Right ventricle myocardium inferior (tissue), 1 donor: ENCODE measurements at regions of chr6 and their contacts with region 1.

Region 1: GRCh38 chr6:87929843-87930288 is 117.8 kb upstream of the SPACA1 start:
- DNase-seq: peak; percentile 78
- ATAC-seq: peak; percentile 98

Region 2: DNA sequence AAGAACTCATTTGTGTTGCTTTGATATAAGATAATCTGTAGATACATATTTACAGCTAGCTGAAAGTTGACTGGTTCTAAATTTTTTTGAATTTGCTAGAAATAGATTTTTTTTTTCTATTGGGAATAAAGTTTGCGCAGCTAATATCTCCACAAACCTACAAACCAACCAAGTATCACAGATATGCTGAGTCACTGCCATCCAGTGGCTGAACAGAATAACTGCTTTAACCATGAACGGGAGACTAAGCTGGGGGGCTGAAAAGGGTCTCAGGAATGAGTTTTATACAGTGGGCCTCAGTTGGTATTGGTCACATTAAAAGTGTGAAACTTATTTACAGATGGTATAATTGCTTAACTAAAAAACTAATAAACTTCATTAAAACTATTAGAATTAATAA is 563.0 kb after region 1 on chr6:
- intact Hi-C with region 1: loop called (anchors 5 kb)
- DNase-seq: no peak
- ATAC-seq: no peak

Region 3: DNA sequence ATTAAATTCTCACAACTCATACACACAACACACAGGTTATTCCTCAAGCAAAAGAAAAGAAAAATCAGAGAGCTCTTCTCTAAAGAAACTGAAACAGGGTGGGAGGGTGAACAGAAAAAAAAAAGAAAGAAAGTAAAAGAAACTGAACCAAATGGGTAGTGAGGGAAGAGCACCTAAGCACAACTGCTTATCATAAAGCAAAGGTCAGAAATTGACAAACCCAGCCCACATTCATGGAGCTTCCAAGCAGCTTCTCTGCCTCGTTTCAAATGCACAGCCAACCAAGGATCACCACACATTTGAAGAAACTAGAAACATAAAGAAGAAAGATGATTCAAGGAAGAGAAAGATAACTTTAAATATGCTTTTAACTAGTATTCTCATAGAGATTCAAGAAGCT is 943.1 kb after region 1 on chr6:
- intact Hi-C with region 1: loop called (anchors 1 kb)
- DNase-seq: no peak
- ATAC-seq: no peak